PC-9 (cell line): ENCODE measurements at regions of chr6 and their contacts with region 1.

Region 1: DNA sequence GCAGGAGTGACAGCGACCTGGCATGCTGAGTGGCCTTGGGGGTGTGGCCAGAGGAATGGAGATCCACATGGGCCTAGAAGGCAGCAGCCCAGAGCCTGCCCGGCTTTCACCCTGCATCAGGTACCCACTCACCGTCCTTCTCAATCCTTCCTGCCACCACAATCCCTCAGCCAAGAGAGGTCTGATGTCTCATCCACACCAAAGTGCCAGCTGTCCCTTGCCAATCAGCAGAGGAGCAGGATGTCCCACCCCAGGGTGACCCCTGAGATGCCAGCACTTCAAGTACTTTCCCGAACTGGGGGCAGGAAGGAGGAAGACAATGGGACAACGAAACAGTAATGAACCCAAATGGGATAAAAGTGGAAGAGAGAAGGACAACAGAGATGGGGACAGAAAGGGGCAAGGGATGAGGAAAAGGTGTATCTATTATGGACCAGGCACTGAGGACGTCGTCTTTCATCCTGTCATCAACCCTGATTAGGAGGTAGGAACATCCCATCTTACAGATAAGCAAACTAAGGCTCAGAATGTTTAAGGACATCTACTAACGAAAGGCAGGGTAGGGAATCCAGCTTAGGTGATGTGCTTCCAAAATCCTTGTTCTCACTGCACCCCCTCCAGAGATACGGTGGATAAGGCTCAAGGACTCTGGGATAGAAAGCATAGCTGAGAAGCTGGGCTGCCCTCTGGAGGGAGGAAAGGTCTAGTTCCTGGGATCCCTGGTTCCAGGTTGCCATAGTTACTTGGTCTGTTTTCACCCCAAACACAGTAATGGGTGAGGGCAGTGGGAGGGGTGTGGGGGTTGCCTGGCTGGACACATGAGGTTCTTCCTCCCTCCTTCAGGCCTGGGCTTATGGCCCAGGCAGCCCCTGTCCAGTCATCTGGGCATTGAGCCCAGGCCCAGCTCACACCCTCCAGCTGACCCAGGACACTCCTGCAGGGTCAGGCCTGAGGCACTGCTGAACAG is 4.5 kb upstream of the TNXB start:
- DNase-seq: peak; percentile 64 to 85
- H3K4me3 ChIP-seq: no peak overlapping the region
- H3K27ac ChIP-seq: no peak overlapping the region
- H3K4me1 ChIP-seq: peaks cover 21% of the 10 kb centered on the region; the same call in 1 of the 2 replicates
- H3K27me3 ChIP-seq: no peaks in the 10 kb centered on the region
- CTCF ChIP-seq: peak; percentile 45; the same call in 1 of the 2 replicates

Region 2: DNA sequence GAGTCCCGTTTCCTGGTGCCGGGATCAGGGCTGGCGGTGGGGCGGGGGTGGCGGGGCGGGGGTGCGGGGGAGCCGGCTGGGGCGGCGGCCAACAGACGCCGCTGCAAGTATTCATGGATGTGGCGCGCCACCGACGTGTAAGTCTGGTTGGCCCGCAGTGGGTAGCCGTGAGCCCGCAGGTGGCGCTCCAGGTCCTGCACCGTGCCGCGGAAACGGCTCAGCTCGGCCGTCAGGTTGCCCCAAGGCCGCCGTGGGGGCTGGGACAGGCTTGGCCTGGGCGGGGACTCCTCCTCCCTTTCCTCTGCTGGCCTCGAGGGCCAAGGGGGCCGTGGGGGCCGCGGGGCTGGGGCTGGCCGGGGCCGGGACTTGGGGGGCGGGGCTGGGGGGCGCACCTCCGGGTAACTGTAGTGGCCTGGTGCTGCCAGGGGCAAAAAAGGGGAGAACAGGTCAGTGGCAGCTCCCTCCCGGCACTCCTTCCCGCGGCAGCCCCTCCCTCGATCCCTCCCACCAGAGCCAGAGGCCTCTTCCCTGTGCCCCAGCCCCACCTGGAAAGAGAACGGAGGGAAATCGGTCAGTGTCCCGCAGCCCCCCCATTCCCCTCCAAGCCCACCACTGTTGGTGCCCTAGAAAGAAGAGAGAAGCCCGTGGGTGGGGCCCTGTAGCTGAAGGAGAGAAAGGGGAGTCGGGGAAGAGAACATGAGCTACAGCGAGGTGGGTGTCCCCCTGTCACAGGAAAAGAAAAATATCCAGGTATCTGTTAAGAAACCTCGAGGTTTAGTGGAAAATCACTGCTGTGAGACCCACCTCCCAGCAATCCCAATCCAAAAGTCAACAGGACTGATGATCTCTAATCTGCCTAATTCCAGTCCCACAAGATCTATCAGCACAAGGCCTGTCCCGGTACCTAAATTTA is 25.8 kb before region 1 on chr6:
- CTCF ChIA-PET with region 1: no interaction called
- POLR2A ChIA-PET with region 1: interaction called, 4 read pairs
- intact Hi-C with region 1: loop called (anchors 1 kb)
- DNase-seq: peak; percentile 72 to 88
- H3K4me3 ChIP-seq: 0 out of 2 replicates have a peak overlapping the region, but pooled peaks have one; percentile 36
- H3K27ac ChIP-seq: no peak overlapping the region
- H3K4me1 ChIP-seq: peaks cover 47% of the 10 kb centered on the region
- H3K27me3 ChIP-seq: no peaks in the 10 kb centered on the region
- CTCF ChIP-seq: peak; percentile 54

Region 3: DNA sequence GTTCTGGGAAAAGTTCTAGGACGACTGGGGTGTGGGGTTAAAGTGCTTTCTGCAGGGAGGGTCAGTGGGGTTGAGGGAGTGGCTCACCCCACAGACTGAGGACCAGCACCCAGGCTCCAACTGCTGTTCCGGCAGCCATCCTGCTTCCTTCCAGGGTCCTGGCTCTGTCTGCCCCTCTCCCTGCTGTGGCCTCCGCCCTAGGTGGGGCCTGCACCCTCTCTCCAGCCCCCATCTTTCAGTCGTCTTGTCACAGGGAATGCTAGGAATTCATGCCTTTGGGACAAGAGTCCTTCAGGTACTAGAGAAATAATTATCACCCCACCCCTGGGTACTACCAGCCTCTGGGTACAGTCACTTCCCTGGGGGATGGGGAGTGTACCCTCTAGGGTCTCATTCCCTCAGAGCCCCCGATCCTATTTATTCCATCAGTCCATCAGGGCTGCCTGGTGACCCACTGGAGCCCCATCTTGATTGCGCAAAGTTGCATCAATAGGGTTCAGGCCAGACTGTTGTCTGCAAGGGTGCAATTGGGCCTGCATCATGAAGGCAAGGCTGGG is 70.5 kb after region 1 on chr6 and contains the start of gene AGER:
- CTCF ChIA-PET with region 1: no interaction called
- POLR2A ChIA-PET with region 1: no interaction called
- intact Hi-C with region 1: no loop called
- DNase-seq: no peak
- H3K4me3 ChIP-seq: no peak within 1 kb of the TSS
- H3K27ac ChIP-seq: no peak within 1 kb of the TSS
- H3K4me1 ChIP-seq: peaks cover 13% of the 10 kb centered on the region
- H3K27me3 ChIP-seq: no peaks in the 10 kb centered on the region
- CTCF ChIP-seq: no peak
- total RNA-seq, gene AGER: 18.1 and 20.4 TPM in 2 replicates